Colonic mucosa (tissue), 4 donors: ENCODE measurements at regions of chr17 and their contacts with region 1.

Region 1: DNA sequence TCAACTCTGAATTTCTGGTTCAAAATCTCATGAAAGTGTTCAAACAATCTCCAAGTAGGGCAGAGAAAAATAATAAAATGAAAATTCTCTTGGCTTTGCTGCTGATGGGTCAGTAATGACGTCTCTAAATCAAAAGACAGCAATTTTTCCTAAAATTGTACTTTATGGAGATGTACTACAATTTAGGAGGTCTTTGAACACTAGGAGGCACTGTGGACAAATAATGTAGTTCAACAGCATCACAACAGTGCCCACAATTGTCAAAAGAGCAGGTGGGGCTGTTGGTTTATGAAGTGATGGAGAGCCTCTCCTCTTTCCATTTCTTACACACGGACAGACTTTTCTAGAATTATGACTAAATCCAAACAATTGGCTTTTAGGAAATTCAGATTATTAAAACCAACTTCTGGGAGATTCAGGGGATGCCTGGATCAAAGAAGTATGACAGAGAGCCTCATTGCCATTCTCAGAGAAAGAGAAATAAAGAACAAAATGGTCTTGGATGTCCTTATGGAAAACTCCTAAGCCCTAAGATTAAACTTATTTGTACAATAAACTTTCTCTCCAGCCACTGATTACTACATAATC is 23.8 kb downstream of the EZH1 start:
- DNase-seq: peak; percentile 48
- H3K4me3 ChIP-seq: no peak overlapping the region
- H3K27ac ChIP-seq: no peak overlapping the region
- H3K4me1 ChIP-seq: no peaks in the 10 kb centered on the region
- H3K27me3 ChIP-seq: no peaks in the 10 kb centered on the region
- CTCF ChIP-seq: peak; percentile 58

Region 2: GRCh38 chr17:42760652-42761581 is 39.8 kb after region 1 on chr17 and contains the start of gene RAMP2:
- intact Hi-C with region 1: loop called (anchors 5 kb)
- DNase-seq: no peak
- H3K4me3 ChIP-seq: peak within 1 kb of the TSS; percentile 43
- H3K27ac ChIP-seq: no peak within 1 kb of the TSS
- H3K4me1 ChIP-seq: no peaks in the 10 kb centered on the region
- H3K27me3 ChIP-seq: peaks cover 18% of the 10 kb centered on the region
- CTCF ChIP-seq: no peak
- total RNA-seq, gene RAMP2: 3.5 to 8.4 TPM

Region 3: DNA sequence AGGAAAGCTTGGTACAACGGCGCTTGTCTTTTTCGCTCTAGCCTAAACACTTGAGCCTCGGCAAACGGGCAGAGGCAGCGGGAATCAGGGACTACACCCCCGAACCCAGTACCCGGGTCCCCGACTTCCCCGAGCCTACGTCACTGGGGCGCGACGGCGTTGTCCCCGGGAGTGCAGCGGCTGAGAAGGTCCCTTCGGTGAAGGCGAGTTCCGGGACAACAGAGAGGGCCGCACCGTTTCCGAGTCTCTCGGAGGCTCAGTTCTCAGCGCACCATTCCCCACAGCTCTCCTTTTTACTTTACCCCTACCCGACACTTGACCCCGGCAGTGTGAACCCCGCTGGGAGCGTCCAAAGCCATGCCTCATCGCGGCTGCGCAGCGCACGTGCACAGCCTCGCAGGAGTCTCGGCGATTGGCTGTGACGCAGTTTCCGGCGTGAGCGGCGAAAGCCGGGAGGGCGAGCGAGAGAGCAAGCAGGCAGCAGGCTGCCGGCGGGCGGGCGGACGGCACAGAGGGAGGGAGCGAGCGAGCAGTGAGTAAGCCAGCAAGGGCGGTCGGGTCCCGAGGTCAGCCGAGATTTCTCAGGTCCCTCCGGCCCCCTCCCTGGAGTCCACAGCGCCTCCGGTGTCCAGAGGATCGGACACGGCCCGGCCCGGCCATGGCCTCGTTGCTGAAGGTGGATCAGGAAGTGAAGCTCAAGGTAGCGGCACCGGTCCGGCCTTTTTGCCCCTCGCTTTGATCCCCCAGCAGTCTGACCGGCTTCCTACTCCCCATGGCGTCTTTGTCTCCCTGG is 112.1 kb after region 1 on chr17 and contains the start of gene PSME3:
- intact Hi-C with region 1: loop called (anchors 5 kb)
- DNase-seq: peak; percentile 95
- H3K4me3 ChIP-seq: peak within 1 kb of the TSS; percentile 97
- H3K27ac ChIP-seq: peak within 1 kb of the TSS; percentile 74
- H3K4me1 ChIP-seq: peaks cover 7% of the 10 kb centered on the region
- H3K27me3 ChIP-seq: no peaks in the 10 kb centered on the region
- CTCF ChIP-seq: no peak
- total RNA-seq, gene PSME3: 86.4 to 163 TPM

Region 4: DNA sequence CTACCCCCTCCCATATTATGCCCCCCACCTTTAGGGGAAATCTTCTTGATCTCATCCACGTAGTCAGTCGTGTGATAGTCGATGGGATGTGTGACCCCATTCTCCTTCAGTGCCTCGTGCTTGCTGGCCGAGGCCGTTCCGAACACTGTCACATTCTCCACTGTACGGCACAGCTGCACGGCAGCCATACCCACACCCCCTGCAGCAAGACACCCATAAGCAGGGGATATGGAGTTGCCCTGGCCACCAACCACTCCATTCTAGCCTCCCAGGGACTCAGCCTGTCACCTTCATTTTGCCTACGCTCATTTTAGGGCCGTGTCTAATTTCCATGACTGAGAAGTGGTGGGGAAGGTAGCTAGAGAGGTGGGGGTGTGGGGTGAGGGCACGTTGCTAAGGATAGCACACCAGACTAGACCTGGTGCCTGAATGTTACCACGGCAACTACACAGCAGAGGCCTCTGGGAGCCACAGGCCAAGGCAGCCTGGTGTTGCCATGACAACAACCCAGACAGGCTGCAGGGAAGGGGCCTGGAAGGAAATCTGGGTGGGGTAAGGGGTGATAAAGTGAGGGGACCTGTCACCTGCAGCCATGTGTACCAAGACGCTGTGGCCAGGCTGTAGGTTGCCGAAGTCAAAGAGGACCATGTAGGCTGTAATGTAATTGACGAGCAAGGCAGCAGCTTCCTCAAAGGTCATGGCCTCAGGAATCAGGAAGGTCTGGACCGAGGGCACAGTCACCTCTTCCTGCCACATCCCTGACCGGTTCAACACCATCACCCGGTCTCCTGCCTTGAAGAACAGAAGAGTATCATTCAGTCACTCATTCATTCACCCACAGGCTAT is 297.1 kb after region 1 on chr17:
- intact Hi-C with region 1: no loop called
- DNase-seq: no peak
- H3K4me3 ChIP-seq: no peak overlapping the region
- H3K27ac ChIP-seq: no peak overlapping the region
- H3K4me1 ChIP-seq: no peaks in the 10 kb centered on the region
- H3K27me3 ChIP-seq: no peaks in the 10 kb centered on the region
- CTCF ChIP-seq: no peak